Mammary epithelial cell (primary cell): ENCODE measurements at regions of chr1 and their contacts with region 1.

Region 1: GRCh38 chr1:6889875-6890480 is 104.7 kb downstream of the CAMTA1 start:
- DNase-seq: peak; percentile 44
- H3K4me3 ChIP-seq: no peak overlapping the region
- H3K27ac ChIP-seq: no peak overlapping the region
- H3K4me1 ChIP-seq: peaks cover 4% of the 10 kb centered on the region
- H3K27me3 ChIP-seq: no peaks in the 10 kb centered on the region
- CTCF ChIP-seq: peak; percentile 85 to 89

Region 2: GRCh38 chr1:6701437-6702153 is 188.4 kb before region 1 on chr1 and contains the start of gene DNAJC11:
- CTCF ChIA-PET with region 1: no interaction called
- dilution Hi-C with region 1: loop called (anchors 25 kb)
- in situ Hi-C with region 1: no loop called
- intact Hi-C with region 1: no loop called
- DNase-seq: peak; percentile 78
- H3K4me3 ChIP-seq: peak within 1 kb of the TSS; percentile 68 to 98 (median 92)
- H3K27ac ChIP-seq: peak within 1 kb of the TSS; percentile 84
- H3K4me1 ChIP-seq: peaks cover 16% of the 10 kb centered on the region
- H3K27me3 ChIP-seq: no peaks in the 10 kb centered on the region
- CTCF ChIP-seq: peak; percentile 64 to 90
- total RNA-seq, gene DNAJC11: 27.3 to 69.3 TPM

Region 3: DNA sequence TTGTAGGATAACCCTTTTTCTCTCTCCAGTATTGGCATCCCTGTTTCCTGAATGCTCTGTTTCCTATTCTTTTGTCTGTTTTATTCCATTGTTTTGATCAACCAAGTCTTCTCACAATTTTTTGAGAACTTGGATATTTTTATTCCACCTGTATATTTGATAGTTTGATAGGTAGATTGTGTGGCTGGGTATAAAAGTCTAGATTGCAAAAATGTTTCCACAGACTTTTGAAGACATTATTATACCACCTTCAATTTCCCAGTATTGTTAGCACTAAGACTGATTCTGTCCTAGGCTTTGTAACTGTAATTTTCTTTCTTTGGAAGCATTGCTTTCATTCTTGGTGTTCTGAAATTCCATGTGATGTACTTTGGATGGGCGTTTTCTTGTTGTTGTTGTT is 178.8 kb before region 1 on chr1:
- CTCF ChIA-PET with region 1: no interaction called
- dilution Hi-C with region 1: loop called (anchors 25 kb)
- in situ Hi-C with region 1: loop called in 1 of 2 experiments (anchors 10 kb)
- intact Hi-C with region 1: no loop called
- DNase-seq: no peak
- H3K4me3 ChIP-seq: no peak overlapping the region
- H3K27ac ChIP-seq: no peak overlapping the region
- H3K4me1 ChIP-seq: no peaks in the 10 kb centered on the region
- H3K27me3 ChIP-seq: peaks cover 2% of the 10 kb centered on the region
- CTCF ChIP-seq: no peak

Region 4: GRCh38 chr1:6727535-6727934 is 162.4 kb before region 1 on chr1:
- CTCF ChIA-PET with region 1: no interaction called
- dilution Hi-C with region 1: loop called (anchors 25 kb)
- in situ Hi-C with region 1: loop called in 1 of 2 experiments (anchors 5 kb)
- intact Hi-C with region 1: no loop called
- DNase-seq: peak; percentile 34
- H3K4me3 ChIP-seq: no peak overlapping the region
- H3K27ac ChIP-seq: no peak overlapping the region
- H3K4me1 ChIP-seq: peaks cover 11% of the 10 kb centered on the region
- H3K27me3 ChIP-seq: no peaks in the 10 kb centered on the region
- CTCF ChIP-seq: peak; percentile 91 to 95

Region 5: DNA sequence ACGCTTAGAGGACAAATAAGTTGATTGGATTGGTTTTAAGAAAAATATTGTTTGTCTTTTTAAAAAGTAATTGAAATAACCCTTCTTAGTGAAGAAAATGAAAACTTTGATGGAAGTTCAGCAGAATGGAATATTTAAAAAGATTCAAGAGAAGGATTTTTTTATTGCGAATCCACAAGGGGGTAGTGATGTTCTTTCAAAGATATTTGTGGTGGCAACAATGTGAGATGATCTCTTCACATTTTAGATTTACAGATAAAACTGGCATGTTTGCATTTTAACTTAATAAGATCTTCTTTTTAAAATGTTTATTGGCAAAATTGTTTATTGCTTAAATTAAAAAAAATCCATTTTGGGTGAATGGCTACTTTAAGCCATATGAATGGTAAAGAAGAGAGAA is 95.8 kb before region 1 on chr1:
- CTCF ChIA-PET with region 1: no interaction called
- dilution Hi-C with region 1: no loop called
- in situ Hi-C with region 1: no loop called
- intact Hi-C with region 1: loop called (anchors 1 kb)
- DNase-seq: peak; percentile 8
- H3K4me3 ChIP-seq: no peak overlapping the region
- H3K27ac ChIP-seq: no peak overlapping the region
- H3K4me1 ChIP-seq: no peaks in the 10 kb centered on the region
- H3K27me3 ChIP-seq: no peaks in the 10 kb centered on the region
- CTCF ChIP-seq: peak; percentile 23 to 25

Region 6: GRCh38 chr1:6800745-6801144 is 89.2 kb before region 1 on chr1:
- CTCF ChIA-PET with region 1: no interaction called
- dilution Hi-C with region 1: no loop called
- in situ Hi-C with region 1: loop called in 1 of 2 experiments (anchors 10 kb)
- intact Hi-C with region 1: no loop called
- DNase-seq: no peak
- H3K4me3 ChIP-seq: no peak overlapping the region
- H3K27ac ChIP-seq: no peak overlapping the region
- H3K4me1 ChIP-seq: peaks cover 17% of the 10 kb centered on the region
- H3K27me3 ChIP-seq: no peaks in the 10 kb centered on the region
- CTCF ChIP-seq: no peak

Region 7: GRCh38 chr1:7207875-7208646 is 318.1 kb after region 1 on chr1:
- CTCF ChIA-PET with region 1: no interaction called
- dilution Hi-C with region 1: no loop called
- in situ Hi-C with region 1: no loop called
- intact Hi-C with region 1: loop called (anchors 2 kb)
- DNase-seq: peak; percentile 64
- H3K4me3 ChIP-seq: no peak overlapping the region
- H3K27ac ChIP-seq: no peak overlapping the region
- H3K4me1 ChIP-seq: no peaks in the 10 kb centered on the region
- H3K27me3 ChIP-seq: no peaks in the 10 kb centered on the region
- CTCF ChIP-seq: peak; percentile 99